ACHN (cell line): ENCODE measurements at regions of chr1 and their contacts with region 1.

Region 1: GRCh38 chr1:202745323-202745888 is 35.2 kb upstream of the SYT2 start:
- DNase-seq: no peak

Region 2: DNA sequence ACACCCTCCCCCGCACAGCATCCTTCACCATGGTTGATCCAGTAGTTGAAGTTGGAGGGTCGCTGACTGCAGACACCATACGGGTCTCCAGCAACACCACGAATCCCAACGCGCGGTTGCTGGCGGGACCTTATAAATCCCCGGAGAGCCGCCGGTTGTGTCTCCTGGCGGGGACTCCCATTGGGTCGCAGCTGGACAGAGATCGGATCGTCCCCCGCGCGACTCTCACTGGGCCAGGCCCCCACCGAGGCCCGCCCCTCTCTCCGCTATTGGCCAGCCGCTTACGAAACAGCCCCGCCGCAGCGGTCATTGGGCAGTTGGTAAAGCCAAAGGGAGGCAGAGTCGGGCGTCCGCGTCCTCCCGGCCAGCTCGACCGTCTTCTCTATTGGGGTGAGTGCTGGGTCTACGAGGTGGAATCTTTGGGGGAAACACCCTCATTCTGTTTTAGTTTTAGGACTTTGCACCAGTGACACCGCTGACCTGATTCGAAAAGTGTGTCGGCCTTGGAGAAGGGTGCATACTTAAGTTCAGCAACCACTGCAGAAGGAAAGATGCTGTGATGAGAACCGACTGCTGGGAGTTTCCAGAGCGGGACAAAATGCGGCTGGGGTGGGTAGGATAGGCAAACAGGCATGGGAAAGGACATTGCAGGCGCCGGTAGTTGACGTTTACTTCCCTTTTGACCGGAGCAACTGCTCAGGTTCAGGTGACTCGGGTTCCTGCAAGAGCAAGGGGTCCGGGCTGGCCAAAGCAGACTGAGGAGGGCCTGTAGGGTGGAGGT is 116.2 kb after region 1 on chr1:
- in situ Hi-C with region 1: loop called (anchors 25 kb)
- DNase-seq: peak; percentile 93

Region 3: GRCh38 chr1:202998836-202999750 is 253.7 kb after region 1 on chr1:
- in situ Hi-C with region 1: no loop called
- DNase-seq: peak; percentile 66